CD14-positive monocyte (primary cell): ENCODE measurements at regions of chr20 and their contacts with region 1.

Region 1: DNA sequence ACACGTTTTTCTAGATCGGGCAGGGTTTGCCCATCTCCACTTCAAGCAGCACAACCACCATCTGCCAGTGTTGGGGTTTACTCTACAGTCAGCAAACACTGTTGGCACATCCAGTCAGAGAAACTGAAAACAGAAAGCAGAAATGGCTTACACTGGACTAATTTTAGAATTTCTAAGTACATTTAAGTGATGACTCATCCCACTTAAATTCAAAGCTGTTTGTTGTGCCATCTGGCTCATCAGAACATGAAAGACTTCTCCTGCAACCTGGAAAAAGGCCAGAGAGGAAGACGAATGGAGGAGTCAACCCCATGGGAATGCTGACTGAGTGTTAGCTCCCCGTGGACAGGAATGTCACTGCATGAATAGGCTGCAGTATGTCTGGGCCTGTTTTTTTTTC is 21.8 kb downstream of the FAM209B start:
- DNase-seq: peak; percentile 47 to 78 (median 76)
- H3K4me3 ChIP-seq: no peak overlapping the region
- H3K4me3 Mint-ChIP-seq: peak overlapping the region; percentile 40 to 69
- H3K27ac ChIP-seq: peak overlapping the region in 1 of 2 donors; percentile 54
- H3K27ac Mint-ChIP-seq: peak overlapping the region; percentile 30 to 89 (median 73)
- H3K4me1 ChIP-seq: peaks cover 28 to 30% of the 10 kb centered on the region in 2 donors
- H3K4me1 Mint-ChIP-seq: peaks cover 24% of the 10 kb centered on the region
- H3K27me3 ChIP-seq: no peaks in the 10 kb centered on the region
- H3K27me3 Mint-ChIP-seq: peaks cover 0 to 4% (median 3%) of the 10 kb centered on the region in 3 donors
- CTCF ChIP-seq: no peak

Region 2: DNA sequence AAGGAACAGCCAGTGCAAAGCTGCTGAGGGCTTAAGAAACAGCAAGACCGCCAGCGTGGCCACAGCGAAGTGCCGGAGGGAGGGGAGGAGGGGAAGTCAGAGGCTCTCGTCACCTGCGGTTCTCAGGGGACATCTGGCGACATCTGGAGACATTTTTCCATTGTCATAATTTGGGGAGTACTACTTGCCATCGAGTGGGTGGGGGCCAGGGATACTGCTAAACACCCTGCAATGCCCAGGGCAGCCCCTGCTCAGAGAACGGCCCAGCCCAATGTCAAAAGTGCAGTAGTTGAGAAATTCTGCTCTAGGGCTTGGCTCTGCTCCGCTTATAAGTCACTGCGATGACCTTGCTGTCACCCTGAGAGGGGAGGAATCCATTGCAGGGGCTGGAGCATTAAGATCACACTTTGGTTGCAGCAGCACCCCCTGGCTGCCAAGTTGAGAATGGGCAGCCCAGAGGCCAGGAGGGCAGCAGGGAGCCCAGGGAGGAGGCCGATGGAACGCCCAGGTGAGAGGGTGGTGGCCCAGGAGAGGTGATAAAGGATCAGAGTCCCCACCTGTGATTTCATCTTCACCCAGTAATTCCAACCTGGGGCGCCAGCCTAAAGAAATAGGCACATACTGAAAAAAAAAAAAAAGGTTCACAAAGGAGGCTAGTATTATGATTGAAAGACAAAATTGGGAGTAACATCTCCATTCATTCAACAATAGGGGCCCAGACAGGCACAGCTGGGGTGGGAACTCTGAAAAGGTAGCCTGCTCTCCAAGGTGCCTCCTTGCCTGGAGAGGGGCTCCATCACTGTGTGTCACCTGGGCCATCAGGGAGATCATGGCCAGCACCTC is 493.4 kb after region 1 on chr20:
- intact Hi-C with region 1: loop called (anchors 2 to 5 kb)
- DNase-seq: no peak
- H3K4me3 ChIP-seq: no peak overlapping the region
- H3K4me3 Mint-ChIP-seq: no peak overlapping the region
- H3K27ac ChIP-seq: no peak overlapping the region
- H3K27ac Mint-ChIP-seq: no peak overlapping the region
- H3K4me1 ChIP-seq: no peaks in the 10 kb centered on the region
- H3K4me1 Mint-ChIP-seq: no peaks in the 10 kb centered on the region
- H3K27me3 ChIP-seq: no peaks in the 10 kb centered on the region
- H3K27me3 Mint-ChIP-seq: peaks cover 0 to 7% (median 1%) of the 10 kb centered on the region in 3 donors
- CTCF ChIP-seq: peak; percentile 71